Activated T-helper 1 cell treated with anti-CD3 and anti-CD28 coated beads, Interleukin-12 subunit alpha, Interleukin-12 subunit beta, Interleukin-2, Interleukin-4 antibody, amounts not matched to agents 30 ng/mL and 10 ng/mL and 1 ng/mL, durations not matched to agents 14 hours and 24 hours and 36 hours (primary cell): ENCODE measurements at regions of chr18 and their contacts with region 1.

Region 1: GRCh38 chr18:47175908-47176575 is at the start of gene IER3IP1:
- DNase-seq: peak; percentile 85
- H3K4me3 Mint-ChIP-seq: peak within 1 kb of the TSS; percentile 57
- H3K27ac Mint-ChIP-seq: peak within 1 kb of the TSS; percentile 69
- H3K4me1 Mint-ChIP-seq: no peaks in the 10 kb centered on the region
- H3K27me3 Mint-ChIP-seq: peaks cover 3% of the 10 kb centered on the region
- total RNA-seq, gene IER3IP1: 14.7 and 16.3 TPM in 2 replicates

Region 2: GRCh38 chr18:46917108-46917802 is 258.8 kb before region 1 on chr18 and contains the starts of genes KATNAL2 and PIAS2:
- intact Hi-C with region 1: loop called (anchors 10 kb)
- DNase-seq: peak; percentile 68
- H3K4me3 Mint-ChIP-seq: peak within 1 kb of the TSS; percentile 94
- H3K27ac Mint-ChIP-seq: peak within 1 kb of the TSS; percentile 90
- H3K4me1 Mint-ChIP-seq: peaks cover 49% of the 10 kb centered on the region
- H3K27me3 Mint-ChIP-seq: peaks cover 5% of the 10 kb centered on the region
- total RNA-seq, gene KATNAL2: 0.26 and 0.27 TPM in 2 replicates
- total RNA-seq, gene PIAS2: 28.5 and 28.7 TPM in 2 replicates

Region 3: GRCh38 chr18:47100214-47100831 is 75.7 kb before region 1 on chr18:
- intact Hi-C with region 1: loop called (anchors 1 kb)
- DNase-seq: peak; percentile 16
- H3K4me3 Mint-ChIP-seq: no peak overlapping the region
- H3K27ac Mint-ChIP-seq: no peak overlapping the region
- H3K4me1 Mint-ChIP-seq: no peaks in the 10 kb centered on the region
- H3K27me3 Mint-ChIP-seq: no peaks in the 10 kb centered on the region

Region 4: GRCh38 chr18:47150029-47150823 is 25.8 kb before region 1 on chr18 and contains the start of gene HDHD2:
- intact Hi-C with region 1: loop called (anchors 1 kb)
- DNase-seq: peak; percentile 77
- H3K4me3 Mint-ChIP-seq: peak within 1 kb of the TSS; percentile 95
- H3K27ac Mint-ChIP-seq: peak within 1 kb of the TSS; percentile 95
- H3K4me1 Mint-ChIP-seq: peaks cover 35% of the 10 kb centered on the region
- H3K27me3 Mint-ChIP-seq: no peaks in the 10 kb centered on the region
- total RNA-seq, gene HDHD2: 36.8 and 39.4 TPM in 2 replicates

Region 5: GRCh38 chr18:47163241-47163640 is 12.8 kb before region 1 on chr18:
- intact Hi-C with region 1: loop called (anchors 1 kb)
- DNase-seq: no peak
- H3K4me3 Mint-ChIP-seq: no peak overlapping the region
- H3K27ac Mint-ChIP-seq: no peak overlapping the region
- H3K4me1 Mint-ChIP-seq: peaks cover 27% of the 10 kb centered on the region
- H3K27me3 Mint-ChIP-seq: no peaks in the 10 kb centered on the region

Region 6: DNA sequence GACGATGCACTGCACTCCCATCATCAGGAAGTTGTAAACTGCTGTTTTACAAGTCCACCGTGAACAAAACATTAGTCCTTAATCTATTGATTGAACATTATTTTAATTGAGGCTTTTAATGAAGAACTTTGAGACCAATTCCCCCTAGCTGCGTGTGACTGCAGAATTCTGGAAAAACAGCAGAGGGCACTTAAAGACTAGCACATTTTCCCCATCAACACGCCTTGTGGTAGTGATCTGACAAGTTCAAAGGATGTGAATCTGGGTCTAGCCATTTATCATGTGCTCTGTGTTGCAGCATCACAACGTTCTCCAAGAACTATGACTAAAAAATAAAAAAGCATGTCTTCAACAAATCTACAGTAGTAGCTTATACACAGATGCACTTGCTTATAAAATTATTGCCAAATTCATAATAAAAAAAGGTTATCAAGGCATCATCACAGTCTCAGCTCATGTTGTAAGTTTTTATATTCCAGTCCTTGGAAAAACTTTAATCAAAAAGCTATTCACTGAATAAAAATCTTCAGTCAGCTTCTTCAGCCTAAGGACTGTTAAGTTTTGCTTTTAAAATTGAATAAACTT is 39.6 kb after region 1 on chr18:
- intact Hi-C with region 1: no loop called
- DNase-seq: no peak
- H3K4me3 Mint-ChIP-seq: no peak overlapping the region
- H3K27ac Mint-ChIP-seq: no peak overlapping the region
- H3K4me1 Mint-ChIP-seq: no peaks in the 10 kb centered on the region
- H3K27me3 Mint-ChIP-seq: peaks cover 39% of the 10 kb centered on the region

Region 7: DNA sequence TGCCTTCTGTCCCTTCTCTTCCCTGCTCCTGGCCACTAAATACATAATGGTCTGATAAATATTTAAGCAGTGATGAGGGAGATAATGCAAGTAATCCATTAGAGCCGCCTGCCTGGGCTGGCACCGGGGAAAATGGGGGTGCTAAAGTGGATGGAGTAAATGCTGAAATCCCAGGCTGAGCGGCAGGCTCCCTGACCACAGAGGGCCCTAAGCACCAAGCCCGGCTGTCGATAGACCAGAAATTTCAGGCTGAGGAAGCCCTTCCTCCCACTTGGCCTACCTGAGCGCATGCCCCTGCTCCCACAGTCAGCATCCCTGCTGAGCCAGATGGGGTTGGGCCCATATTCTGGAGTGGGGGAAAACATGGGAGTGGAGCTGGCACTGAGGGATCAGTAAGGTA is 272.9 kb after region 1 on chr18:
- intact Hi-C with region 1: no loop called
- DNase-seq: no peak
- H3K4me3 Mint-ChIP-seq: no peak overlapping the region
- H3K27ac Mint-ChIP-seq: no peak overlapping the region
- H3K4me1 Mint-ChIP-seq: no peaks in the 10 kb centered on the region
- H3K27me3 Mint-ChIP-seq: peaks cover 6% of the 10 kb centered on the region

Region 8: DNA sequence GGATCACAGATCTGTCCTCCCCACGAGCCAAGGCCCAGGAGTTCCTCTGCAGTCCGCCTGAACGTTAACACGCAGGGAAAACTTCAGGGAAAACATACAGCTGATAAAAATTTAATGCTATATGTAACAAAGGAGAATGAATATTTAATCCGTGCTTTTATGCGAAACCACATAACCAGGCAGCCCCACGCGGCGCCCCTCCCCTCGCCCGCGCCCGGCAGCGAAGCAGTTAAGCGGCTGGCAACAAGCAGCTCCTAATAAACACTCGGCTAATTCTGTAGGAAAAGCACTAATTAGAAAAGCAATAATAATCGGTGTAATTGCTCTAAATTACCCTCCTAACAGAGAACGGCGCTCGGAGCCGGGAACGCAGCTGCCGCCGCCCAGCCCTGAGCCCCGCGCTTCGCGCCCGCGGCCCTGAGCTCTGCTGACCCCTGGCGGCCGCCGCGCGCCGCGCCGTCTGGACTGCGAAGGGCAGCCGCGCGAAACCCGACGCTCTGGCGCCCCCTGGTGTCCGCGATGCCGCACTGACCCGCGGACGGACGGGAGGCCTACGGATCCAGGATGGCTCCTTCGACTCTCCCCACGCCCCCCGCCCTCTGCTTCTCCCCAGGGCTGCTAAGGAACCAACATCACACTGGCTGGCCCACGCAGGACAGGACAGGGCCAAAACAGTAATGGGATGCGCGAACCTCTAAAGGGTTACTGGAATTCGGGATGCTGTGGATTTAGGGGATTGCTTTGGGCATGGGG is 573.0 kb after region 1 on chr18:
- intact Hi-C with region 1: loop called (anchors 1 kb)
- DNase-seq: peak; percentile 80
- H3K4me3 Mint-ChIP-seq: no peak overlapping the region
- H3K27ac Mint-ChIP-seq: no peak overlapping the region
- H3K4me1 Mint-ChIP-seq: peaks cover 5% of the 10 kb centered on the region
- H3K27me3 Mint-ChIP-seq: peaks cover 14% of the 10 kb centered on the region